Activated CD4-positive, alpha-beta T cell treated with anti-CD3 and anti-CD28 coated beads for 36 hours (primary cell): ENCODE measurements at regions of chr11 and their contacts with region 1.

Region 1: GRCh38 chr11:35391922-35392813 is 27.2 kb downstream of the SLC1A2 start:
- DNase-seq: peak; percentile 91
- ATAC-seq: peak; percentile 77
- H3K4me3 Mint-ChIP-seq: no peak overlapping the region
- H3K27ac Mint-ChIP-seq: no peak overlapping the region
- H3K4me1 Mint-ChIP-seq: peaks cover 29% of the 10 kb centered on the region
- H3K27me3 Mint-ChIP-seq: no peaks in the 10 kb centered on the region

Region 2: DNA sequence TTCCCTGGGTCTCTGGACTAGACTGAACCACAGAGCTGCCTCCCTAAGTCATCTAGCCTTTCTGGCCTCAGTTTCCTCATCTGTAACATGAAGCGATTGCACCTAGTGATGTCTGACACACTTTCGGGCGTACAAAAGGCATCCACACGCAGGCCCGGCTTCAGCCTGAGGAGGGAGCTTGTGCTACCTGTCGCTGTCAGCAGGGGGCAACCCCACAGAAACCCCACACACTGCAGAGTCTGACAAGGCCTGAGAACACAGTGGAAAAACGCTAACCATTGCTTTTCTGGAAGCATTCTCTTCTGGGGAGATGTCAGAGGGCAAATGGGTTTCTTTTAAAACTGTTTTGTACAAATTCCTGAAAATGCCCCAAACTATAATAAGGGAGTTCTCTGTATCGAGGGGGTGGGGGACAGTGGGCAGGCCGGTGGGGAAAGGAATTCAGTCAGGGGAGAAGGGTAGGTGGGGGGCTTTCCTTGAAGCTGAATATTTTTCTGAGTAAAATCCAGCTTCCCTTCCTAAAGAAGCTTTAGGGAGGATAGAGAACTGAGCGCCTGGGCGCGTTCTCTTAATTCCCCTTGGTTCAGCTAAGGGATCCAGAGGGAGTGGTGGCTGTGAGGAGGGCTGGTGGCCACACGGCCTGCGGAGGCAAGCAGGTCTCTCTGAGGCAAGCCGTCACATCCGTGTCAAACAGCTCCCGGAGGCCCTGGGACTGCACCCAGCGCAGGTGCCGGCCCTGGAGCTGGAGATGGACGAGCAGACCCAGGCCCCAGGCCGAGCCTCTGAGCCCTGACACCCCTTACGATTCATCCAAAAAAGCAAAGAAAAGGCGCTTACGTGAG is 879.1 kb before region 1 on chr11:
- CTCF ChIA-PET with region 1: no interaction called
- POLR2A ChIA-PET with region 1: no interaction called
- intact Hi-C with region 1: loop called in 1 of 2 experiments (anchors 1 kb)
- DNase-seq: peak; percentile 77
- ATAC-seq: peak; percentile 98
- H3K4me3 Mint-ChIP-seq: no peak overlapping the region
- H3K27ac Mint-ChIP-seq: no peak overlapping the region
- H3K4me1 Mint-ChIP-seq: no peaks in the 10 kb centered on the region
- H3K27me3 Mint-ChIP-seq: peaks cover 2% of the 10 kb centered on the region

Region 3: GRCh38 chr11:34840736-34841386 is 551.3 kb before region 1 on chr11:
- CTCF ChIA-PET with region 1: interaction called, 3 read pairs
- POLR2A ChIA-PET with region 1: no interaction called
- intact Hi-C with region 1: loop called in 1 of 2 experiments (anchors 2 kb)
- DNase-seq: peak; percentile 48
- ATAC-seq: peak; percentile 85
- H3K4me3 Mint-ChIP-seq: no peak overlapping the region
- H3K27ac Mint-ChIP-seq: no peak overlapping the region
- H3K4me1 Mint-ChIP-seq: no peaks in the 10 kb centered on the region
- H3K27me3 Mint-ChIP-seq: peaks cover 16% of the 10 kb centered on the region

Region 4: DNA sequence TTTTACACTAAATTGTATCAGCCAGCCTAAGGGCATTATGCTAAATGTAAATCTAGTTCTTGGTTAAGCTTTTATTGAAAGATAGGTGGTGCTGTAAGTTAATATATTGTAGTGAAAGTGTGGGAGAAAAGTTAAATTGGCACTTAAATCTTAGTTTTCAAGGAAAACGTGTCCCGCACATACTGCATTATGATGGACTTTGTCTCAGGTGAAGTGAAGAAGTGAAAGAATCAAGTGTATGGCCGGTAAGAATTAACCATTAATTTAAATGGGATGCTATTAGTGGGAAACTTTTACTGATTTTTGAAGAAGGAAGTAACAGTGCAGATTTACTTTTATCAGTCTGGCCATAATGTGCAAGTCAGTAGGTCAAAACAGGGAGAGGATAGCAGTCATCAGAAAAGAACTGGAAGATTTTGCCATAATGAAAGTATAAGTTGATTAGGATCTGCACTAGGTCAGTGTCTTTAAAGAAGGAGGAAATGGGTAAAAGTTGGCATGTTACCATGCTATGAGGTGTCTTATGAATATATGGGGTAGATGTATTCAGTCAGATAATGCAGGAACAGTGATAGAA is 394.1 kb before region 1 on chr11:
- CTCF ChIA-PET with region 1: interaction called, 8 read pairs
- POLR2A ChIA-PET with region 1: no interaction called
- intact Hi-C with region 1: loop called (anchors 1 kb)
- DNase-seq: no peak
- ATAC-seq: peak; percentile 39
- H3K4me3 Mint-ChIP-seq: no peak overlapping the region
- H3K27ac Mint-ChIP-seq: peak overlapping the region; percentile 11
- H3K4me1 Mint-ChIP-seq: peaks cover 30% of the 10 kb centered on the region
- H3K27me3 Mint-ChIP-seq: no peaks in the 10 kb centered on the region

Region 5: GRCh38 chr11:35237860-35238715 is 154.1 kb before region 1 on chr11:
- CTCF ChIA-PET with region 1: interaction called, 10 read pairs
- POLR2A ChIA-PET with region 1: no interaction called
- intact Hi-C with region 1: loop called (anchors 1 to 2 kb)
- DNase-seq: peak; percentile 78
- ATAC-seq: no peak
- H3K4me3 Mint-ChIP-seq: no peak overlapping the region
- H3K27ac Mint-ChIP-seq: peak overlapping the region; percentile 74
- H3K4me1 Mint-ChIP-seq: peaks cover 68% of the 10 kb centered on the region
- H3K27me3 Mint-ChIP-seq: no peaks in the 10 kb centered on the region

Region 6: DNA sequence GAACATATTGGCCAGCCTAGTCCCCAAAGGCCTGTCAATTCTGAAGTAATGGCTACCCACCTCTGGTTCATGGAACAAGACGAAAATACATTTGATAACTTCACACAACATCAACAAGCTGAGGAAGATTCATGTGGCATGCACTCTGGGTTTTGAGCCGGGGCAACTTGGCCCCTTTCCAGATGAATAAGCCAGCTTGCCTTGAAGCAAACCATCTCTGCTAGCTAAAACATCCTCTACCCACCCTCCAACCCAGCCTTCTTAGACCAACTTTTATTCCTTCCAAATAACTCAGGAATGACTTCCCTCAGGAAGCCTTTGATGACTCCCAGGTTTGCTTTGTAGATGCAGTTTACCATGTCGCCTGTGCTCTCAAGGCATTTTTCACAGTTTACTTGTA is 67.2 kb before region 1 on chr11:
- CTCF ChIA-PET with region 1: no interaction called
- POLR2A ChIA-PET with region 1: no interaction called
- intact Hi-C with region 1: no loop called
- DNase-seq: no peak
- ATAC-seq: no peak
- H3K4me3 Mint-ChIP-seq: no peak overlapping the region
- H3K27ac Mint-ChIP-seq: no peak overlapping the region
- H3K4me1 Mint-ChIP-seq: peaks cover 20% of the 10 kb centered on the region
- H3K27me3 Mint-ChIP-seq: no peaks in the 10 kb centered on the region

Region 7: GRCh38 chr11:35343033-35343598 is 49.1 kb before region 1 on chr11:
- CTCF ChIA-PET with region 1: interaction called, 3 read pairs
- POLR2A ChIA-PET with region 1: no interaction called
- intact Hi-C with region 1: loop called in 1 of 2 experiments (anchors 2 kb)
- DNase-seq: peak; percentile 50
- ATAC-seq: peak; percentile 86
- H3K4me3 Mint-ChIP-seq: no peak overlapping the region
- H3K27ac Mint-ChIP-seq: peak overlapping the region; percentile 23
- H3K4me1 Mint-ChIP-seq: peaks cover 31% of the 10 kb centered on the region
- H3K27me3 Mint-ChIP-seq: no peaks in the 10 kb centered on the region